Right ventricle myocardium superior (tissue), 1 donor: ENCODE measurements at regions of chr1 and their contacts with region 1.

Region 1: GRCh38 chr1:198359024-198359653 is 181.3 kb downstream of the ATP6V1G3 start:
- DNase-seq: no peak
- ATAC-seq: no peak

Region 2: GRCh38 chr1:198096390-198096789 is 262.7 kb before region 1 on chr1:
- intact Hi-C with region 1: loop called (anchors 10 kb)
- DNase-seq: no peak
- ATAC-seq: no peak

Region 3: DNA sequence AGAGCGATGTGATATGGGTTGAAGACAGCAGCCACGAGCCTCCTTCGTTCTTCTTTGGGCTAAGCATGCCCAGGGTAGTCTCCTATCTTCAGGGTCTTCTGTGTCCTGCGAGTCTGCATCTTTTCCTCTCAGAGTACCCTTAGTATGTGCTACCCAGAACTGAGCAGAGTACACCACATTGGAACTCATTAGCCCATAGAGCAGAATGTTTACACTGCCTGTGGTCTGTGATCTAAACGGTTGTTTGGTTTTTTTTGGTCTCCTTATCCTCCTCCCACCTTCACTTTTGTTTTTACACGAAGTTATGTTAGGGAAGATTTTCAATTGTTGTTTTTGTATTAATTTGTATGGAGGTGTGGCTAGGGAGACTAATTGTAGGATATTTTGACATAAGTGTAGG is 75.9 kb before region 1 on chr1:
- intact Hi-C with region 1: no loop called
- DNase-seq: no peak
- ATAC-seq: no peak